ENCODE measurements at regions of chr17 and their contacts with region 1.

Region 1: GRCh38 chr17:28076144-28076543 is 33.7 kb downstream of the NLK start:
- DNase-seq: no peak
- ATAC-seq: peak; percentile 60; the same call in 2 of the 3 replicates
- H3K4me3 ChIP-seq: no peak overlapping the region
- H3K27ac ChIP-seq: peak overlapping the region; percentile 8; the same call in 1 of the 3 replicates
- H3K4me1 ChIP-seq: peaks cover 0 to 21% of the 10 kb centered on the region in 2 experiments; a peak in 3 of 5 replicates
- H3K27me3 ChIP-seq: no peaks in the 10 kb centered on the region
- CTCF ChIP-seq: no peak
- EP300 ChIP-seq: no peak
- POLR2A ChIP-seq: no peak
- RAD21 ChIP-seq: no peak

Region 2: DNA sequence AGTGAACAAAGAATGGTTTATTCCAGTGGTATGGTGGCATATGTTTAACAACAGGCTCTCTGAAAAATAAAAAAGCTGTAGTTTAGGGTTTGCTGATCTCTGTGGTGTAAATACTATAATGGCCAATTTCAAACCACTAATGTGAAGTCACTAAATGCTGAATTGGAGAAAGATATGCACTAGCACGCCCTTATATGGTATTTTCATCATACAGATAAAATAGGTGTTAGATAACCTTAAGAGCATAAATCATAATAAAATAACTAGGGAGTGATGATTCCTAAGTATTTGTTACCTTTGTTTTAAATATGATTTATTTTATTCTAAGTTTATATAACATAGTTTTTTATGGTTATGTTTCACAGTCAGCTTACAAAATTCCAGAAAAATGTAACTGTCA is 16.5 kb before region 1 on chr17:
- CTCF ChIA-PET with region 1: no interaction called
- POLR2A ChIA-PET with region 1: interaction called, 15 read pairs
- in situ Hi-C with region 1: no loop called
- intact Hi-C with region 1: no loop called
- DNase-seq: no peak
- ATAC-seq: no peak
- H3K4me3 ChIP-seq: no peak overlapping the region
- H3K27ac ChIP-seq: no peak overlapping the region
- H3K4me1 ChIP-seq: peaks cover 6 to 18% of the 10 kb centered on the region in 2 experiments
- H3K27me3 ChIP-seq: no peaks in the 10 kb centered on the region
- CTCF ChIP-seq: no peak
- EP300 ChIP-seq: no peak
- POLR2A ChIP-seq: no peak
- RAD21 ChIP-seq: no peak

Region 3: DNA sequence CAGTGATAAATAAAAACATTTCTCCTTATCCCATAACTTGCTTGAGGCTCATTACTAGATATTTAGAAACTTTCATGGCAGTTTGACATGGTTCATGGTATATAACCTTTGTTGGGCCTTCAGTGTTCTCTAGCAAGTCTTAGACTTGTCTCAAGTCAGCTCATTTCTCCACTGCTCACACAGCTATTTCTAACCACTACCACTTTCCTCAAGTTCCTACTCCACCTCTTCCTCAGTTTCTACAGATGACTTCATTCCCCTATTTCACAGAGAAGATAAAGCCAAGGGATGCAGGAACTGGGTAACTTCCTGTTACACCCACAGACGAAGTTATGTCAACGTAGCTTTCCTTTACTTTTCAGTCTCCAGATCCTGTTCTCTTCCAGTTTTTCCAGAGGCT is 10.4 kb before region 1 on chr17:
- CTCF ChIA-PET with region 1: no interaction called
- POLR2A ChIA-PET with region 1: interaction called, 15 read pairs
- in situ Hi-C with region 1: no loop called
- intact Hi-C with region 1: no loop called
- DNase-seq: no peak
- ATAC-seq: peak; percentile 26; the same call in 1 of the 3 replicates
- H3K4me3 ChIP-seq: no peak overlapping the region
- H3K27ac ChIP-seq: peak overlapping the region; percentile 31; the same call in 1 of the 3 replicates
- H3K4me1 ChIP-seq: peaks cover 6 to 12% of the 10 kb centered on the region in 2 experiments; a peak in 4 of 5 replicates
- H3K27me3 ChIP-seq: no peaks in the 10 kb centered on the region
- CTCF ChIP-seq: no peak
- EP300 ChIP-seq: no peak
- POLR2A ChIP-seq: no peak
- RAD21 ChIP-seq: no peak

Region 4: GRCh38 chr17:28133562-28133970 is 57.4 kb after region 1 on chr17:
- CTCF ChIA-PET with region 1: no interaction called
- POLR2A ChIA-PET with region 1: no interaction called
- in situ Hi-C with region 1: no loop called
- intact Hi-C with region 1: no loop called
- DNase-seq: no peak
- ATAC-seq: no peak
- H3K4me3 ChIP-seq: no peak overlapping the region
- H3K27ac ChIP-seq: no peak overlapping the region
- H3K4me1 ChIP-seq: no peaks in the 10 kb centered on the region
- H3K27me3 ChIP-seq: no peaks in the 10 kb centered on the region
- CTCF ChIP-seq: no peak
- EP300 ChIP-seq: no peak
- POLR2A ChIP-seq: no peak
- RAD21 ChIP-seq: no peak

Measured in K562 (cell line).